ENCODE measurements at regions of chr4 and their contacts with region 1.

Region 1: DNA sequence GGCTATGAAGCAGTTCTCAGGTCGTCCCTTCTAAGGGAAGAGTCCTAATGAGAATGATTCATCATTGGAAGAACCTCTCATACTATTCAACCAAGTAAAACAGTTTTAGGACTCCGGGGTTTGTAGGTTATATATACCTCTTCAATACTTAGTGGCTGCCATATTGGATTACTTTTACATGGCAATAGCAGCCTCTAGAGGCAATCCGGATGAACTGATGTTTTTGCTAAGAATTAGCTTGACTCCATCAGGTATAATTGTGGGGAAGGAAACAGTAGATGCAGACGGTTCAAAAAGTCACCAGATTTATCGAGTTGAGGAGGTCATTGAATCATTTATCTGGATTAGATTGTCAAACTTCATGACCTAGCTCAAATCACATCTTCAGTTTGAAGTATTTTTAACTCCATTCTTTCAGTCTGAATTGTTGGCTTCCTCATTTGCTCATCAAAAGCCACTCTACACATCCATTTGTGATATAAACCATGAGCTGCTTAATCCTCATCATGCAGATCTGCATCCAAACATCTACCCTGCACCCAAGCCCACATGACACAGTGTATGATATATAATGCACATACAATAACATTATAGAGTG is 28.4 kb downstream of the GUCY1B1 start:
- DNase-seq: no peak
- ATAC-seq: peak; percentile 38 to 91 (median 86)
- H3K4me3 ChIP-seq: no peak overlapping the region
- H3K27ac ChIP-seq: no peak overlapping the region
- H3K4me1 ChIP-seq: peaks cover 0 to 40% (median 7%) of the 10 kb centered on the region in 12 donors
- H3K27me3 ChIP-seq: no peaks in the 10 kb centered on the region
- CTCF ChIP-seq: peak; percentile 54 to 88 (median 76)
- POLR2A ChIP-seq: no peak

Region 2: GRCh38 chr4:155509555-155509954 is 277.7 kb before region 1 on chr4:
- intact Hi-C with region 1: loop called in 1 of 10 experiments (anchors 10 kb)
- DNase-seq: no peak
- ATAC-seq: peak in 3 of 4 donors; percentile 49 to 79 (median 62)
- H3K4me3 ChIP-seq: no peak overlapping the region
- H3K27ac ChIP-seq: peak overlapping the region in 11 of 12 donors; percentile 5 to 75 (median 57)
- H3K4me1 ChIP-seq: peaks cover 0 to 77% (median 39%) of the 10 kb centered on the region in 12 donors
- H3K27me3 ChIP-seq: no peaks in the 10 kb centered on the region
- CTCF ChIP-seq: no peak
- POLR2A ChIP-seq: no peak

Region 3: GRCh38 chr4:155529272-155529671 is 257.9 kb before region 1 on chr4:
- intact Hi-C with region 1: loop called in 1 of 10 experiments (anchors 10 kb)
- DNase-seq: no peak
- ATAC-seq: no peak
- H3K4me3 ChIP-seq: no peak overlapping the region
- H3K27ac ChIP-seq: no peak overlapping the region
- H3K4me1 ChIP-seq: peaks cover 0 to 47% (median 13%) of the 10 kb centered on the region in 12 donors
- H3K27me3 ChIP-seq: no peaks in the 10 kb centered on the region
- CTCF ChIP-seq: peak in 5 of 12 donors; percentile 10 to 45 (median 21)
- POLR2A ChIP-seq: no peak

Region 4: GRCh38 chr4:156021298-156021697 is 234.1 kb after region 1 on chr4:
- intact Hi-C with region 1: no loop called
- DNase-seq: no peak
- ATAC-seq: no peak
- H3K4me3 ChIP-seq: no peak overlapping the region
- H3K27ac ChIP-seq: no peak overlapping the region
- H3K4me1 ChIP-seq: no peaks in the 10 kb centered on the region
- H3K27me3 ChIP-seq: no peaks in the 10 kb centered on the region
- CTCF ChIP-seq: no peak
- POLR2A ChIP-seq: no peak

Measured in heart left ventricle (tissue), 16 donors.